CD8-positive, alpha-beta T cell (primary cell): ENCODE measurements at regions of chr7 and their contacts with region 1.

Region 1: DNA sequence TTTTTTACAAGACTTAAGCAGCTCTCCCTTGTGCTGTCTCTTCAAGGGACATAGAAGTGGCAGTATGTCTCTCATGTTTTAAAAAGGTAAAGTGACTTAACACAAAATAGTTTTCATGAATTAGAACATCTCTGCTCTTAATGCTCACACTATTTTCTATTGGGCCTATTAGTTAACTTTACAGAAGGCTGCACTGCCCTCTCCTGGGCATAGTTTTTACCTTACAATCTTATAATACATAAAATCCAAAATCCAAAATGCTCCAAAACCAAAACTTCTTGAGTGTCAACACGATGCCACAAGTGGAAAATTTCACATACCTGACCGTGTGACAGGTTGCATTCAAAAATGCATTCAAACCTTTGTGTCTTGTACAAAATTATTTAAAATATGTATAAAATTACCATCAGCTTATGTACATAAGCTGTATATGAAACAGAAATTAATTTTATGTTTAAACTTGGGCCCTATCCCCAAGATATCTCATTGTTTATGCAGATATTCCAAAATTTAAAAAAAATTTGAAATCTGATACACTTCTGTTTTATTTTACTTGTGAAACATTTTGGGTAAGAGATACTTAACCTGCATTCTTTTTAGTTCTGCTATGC is 25.8 kb downstream of the TES start:
- DNase-seq: peak; percentile 28 to 79 (median 66)
- ATAC-seq: peak; percentile 82
- H3K4me3 ChIP-seq: no peak overlapping the region
- H3K4me3 Mint-ChIP-seq: no peak overlapping the region
- H3K27ac ChIP-seq: peak overlapping the region in 1 of 2 experiments; percentile 9
- H3K27ac Mint-ChIP-seq: no peak overlapping the region
- H3K4me1 ChIP-seq: peaks cover 43% of the 10 kb centered on the region
- H3K4me1 Mint-ChIP-seq: peaks cover 67% of the 10 kb centered on the region
- H3K27me3 ChIP-seq: no peaks in the 10 kb centered on the region
- H3K27me3 Mint-ChIP-seq: no peaks in the 10 kb centered on the region
- CTCF ChIP-seq: peak; percentile 87

Region 2: GRCh38 chr7:116138202-116138801 is 97.8 kb before region 1 on chr7:
- CTCF ChIA-PET with region 1: interaction called, 3 read pairs
- POLR2A ChIA-PET with region 1: no interaction called
- intact Hi-C with region 1: loop called in 1 of 2 experiments (anchors 1 kb)
- DNase-seq: peak in 3 of 9 experiments; percentile 16 to 70 (median 60)
- ATAC-seq: peak; percentile 82
- H3K4me3 ChIP-seq: no peak overlapping the region
- H3K4me3 Mint-ChIP-seq: no peak overlapping the region
- H3K27ac ChIP-seq: no peak overlapping the region
- H3K27ac Mint-ChIP-seq: no peak overlapping the region
- H3K4me1 ChIP-seq: peaks cover 4% of the 10 kb centered on the region
- H3K4me1 Mint-ChIP-seq: peaks cover 6% of the 10 kb centered on the region
- H3K27me3 ChIP-seq: no peaks in the 10 kb centered on the region
- H3K27me3 Mint-ChIP-seq: peaks cover 2% of the 10 kb centered on the region
- CTCF ChIP-seq: peak; percentile 84

Region 3: GRCh38 chr7:116180302-116180701 is 55.8 kb before region 1 on chr7:
- CTCF ChIA-PET with region 1: interaction called, 282 read pairs
- POLR2A ChIA-PET with region 1: interaction called, 16 read pairs
- intact Hi-C with region 1: loop called (anchors 1 kb)
- DNase-seq: peak in 5 of 9 experiments; percentile 16 to 76 (median 51)
- ATAC-seq: peak; percentile 80
- H3K4me3 ChIP-seq: no peak overlapping the region
- H3K4me3 Mint-ChIP-seq: no peak overlapping the region
- H3K27ac ChIP-seq: no peak overlapping the region
- H3K27ac Mint-ChIP-seq: no peak overlapping the region
- H3K4me1 ChIP-seq: no peaks in the 10 kb centered on the region
- H3K4me1 Mint-ChIP-seq: peaks cover 3% of the 10 kb centered on the region
- H3K27me3 ChIP-seq: no peaks in the 10 kb centered on the region
- H3K27me3 Mint-ChIP-seq: peaks cover 3% of the 10 kb centered on the region
- CTCF ChIP-seq: peak; percentile 77

Region 4: GRCh38 chr7:116200963-116201362 is 35.2 kb before region 1 on chr7:
- CTCF ChIA-PET with region 1: interaction called, 11 read pairs
- POLR2A ChIA-PET with region 1: interaction called, 3 read pairs
- intact Hi-C with region 1: no loop called
- DNase-seq: no peak
- ATAC-seq: no peak
- H3K4me3 ChIP-seq: no peak overlapping the region
- H3K4me3 Mint-ChIP-seq: no peak overlapping the region
- H3K27ac ChIP-seq: no peak overlapping the region
- H3K27ac Mint-ChIP-seq: no peak overlapping the region
- H3K4me1 ChIP-seq: no peaks in the 10 kb centered on the region
- H3K4me1 Mint-ChIP-seq: no peaks in the 10 kb centered on the region
- H3K27me3 ChIP-seq: no peaks in the 10 kb centered on the region
- H3K27me3 Mint-ChIP-seq: no peaks in the 10 kb centered on the region
- CTCF ChIP-seq: no peak

Region 5: DNA sequence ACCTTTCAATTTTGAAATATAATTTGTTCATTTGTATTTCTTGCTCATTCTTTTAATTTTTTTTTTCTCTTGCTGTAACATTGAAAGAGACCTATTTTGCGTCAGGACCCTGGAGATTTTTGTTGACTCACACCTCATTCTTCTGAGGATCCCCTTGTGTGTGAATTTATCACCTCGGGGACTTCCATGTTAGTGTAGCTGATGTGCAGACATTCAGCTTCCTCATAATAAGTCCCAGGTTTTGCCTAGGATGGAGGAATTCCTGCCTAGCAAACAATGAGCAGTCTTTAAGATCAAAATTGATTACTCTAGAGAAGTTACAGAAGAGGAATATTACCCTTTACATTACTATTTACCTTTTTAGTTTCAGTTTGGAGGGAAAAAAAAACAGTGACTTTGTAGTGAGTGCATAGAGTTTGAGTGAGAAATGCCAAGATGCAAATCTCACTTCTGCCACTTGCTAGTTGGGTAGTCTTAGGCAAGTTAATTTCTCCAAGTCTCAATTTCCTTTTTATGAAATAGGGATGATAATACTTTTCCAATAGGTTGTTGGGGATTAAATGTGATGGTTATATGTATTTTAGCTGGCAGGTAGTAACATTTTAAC is 11.5 kb before region 1 on chr7:
- CTCF ChIA-PET with region 1: interaction called, 40 read pairs
- POLR2A ChIA-PET with region 1: no interaction called
- intact Hi-C with region 1: loop called in 1 of 2 experiments (anchors 1 kb)
- DNase-seq: peak in 3 of 9 experiments; percentile 15 to 77 (median 60)
- ATAC-seq: peak; percentile 73
- H3K4me3 ChIP-seq: peak overlapping the region in 1 of 2 experiments; percentile 13
- H3K4me3 Mint-ChIP-seq: peak overlapping the region; percentile 69
- H3K27ac ChIP-seq: peak overlapping the region in 1 of 2 experiments; percentile 67
- H3K27ac Mint-ChIP-seq: peak overlapping the region; percentile 49
- H3K4me1 ChIP-seq: peaks cover 76% of the 10 kb centered on the region
- H3K4me1 Mint-ChIP-seq: peaks cover 87% of the 10 kb centered on the region
- H3K27me3 ChIP-seq: no peaks in the 10 kb centered on the region
- H3K27me3 Mint-ChIP-seq: no peaks in the 10 kb centered on the region
- CTCF ChIP-seq: no peak

Region 6: GRCh38 chr7:116588641-116589594 is 352.8 kb after region 1 on chr7:
- CTCF ChIA-PET with region 1: interaction called, 14 read pairs
- POLR2A ChIA-PET with region 1: no interaction called
- intact Hi-C with region 1: no loop called
- DNase-seq: peak in 2 of 9 experiments; percentile 54 to 63
- ATAC-seq: no peak
- H3K4me3 ChIP-seq: no peak overlapping the region
- H3K4me3 Mint-ChIP-seq: no peak overlapping the region
- H3K27ac ChIP-seq: no peak overlapping the region
- H3K27ac Mint-ChIP-seq: no peak overlapping the region
- H3K4me1 ChIP-seq: peaks cover 4% of the 10 kb centered on the region
- H3K4me1 Mint-ChIP-seq: peaks cover 16% of the 10 kb centered on the region
- H3K27me3 ChIP-seq: peaks cover 0 to 2% of the 10 kb centered on the region in 2 experiments
- H3K27me3 Mint-ChIP-seq: peaks cover 15% of the 10 kb centered on the region
- CTCF ChIP-seq: peak; percentile 95